ENCODE measurements at regions of chr1 and their contacts with region 1.

Region 1: GRCh38 chr1:91650764-91651163 is 150.1 kb downstream of the CDC7 start:
- DNase-seq: peak; percentile 89

Region 2: DNA sequence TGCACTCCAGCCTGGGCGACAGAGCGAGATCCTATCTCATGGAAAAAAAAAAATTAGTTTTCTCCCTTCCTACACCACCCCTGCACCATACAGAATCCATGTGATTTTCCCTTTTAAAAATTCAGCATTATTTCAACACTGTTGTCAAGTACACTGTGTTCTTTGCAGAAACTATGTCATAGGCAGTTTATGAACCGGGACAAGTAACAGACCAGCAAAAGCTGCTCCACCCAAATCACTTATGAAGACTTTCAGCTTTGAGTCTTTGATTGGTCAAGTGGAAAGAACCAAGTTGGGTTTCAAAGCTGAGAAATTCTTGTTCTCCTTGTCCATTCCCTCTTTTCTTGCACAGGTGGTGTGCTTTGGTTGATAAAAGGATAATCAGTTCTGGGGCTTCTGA is 22.8 kb after region 1 on chr1:
- intact Hi-C with region 1: loop called in 1 of 2 experiments (anchors 1 kb)
- DNase-seq: no peak

Region 3: DNA sequence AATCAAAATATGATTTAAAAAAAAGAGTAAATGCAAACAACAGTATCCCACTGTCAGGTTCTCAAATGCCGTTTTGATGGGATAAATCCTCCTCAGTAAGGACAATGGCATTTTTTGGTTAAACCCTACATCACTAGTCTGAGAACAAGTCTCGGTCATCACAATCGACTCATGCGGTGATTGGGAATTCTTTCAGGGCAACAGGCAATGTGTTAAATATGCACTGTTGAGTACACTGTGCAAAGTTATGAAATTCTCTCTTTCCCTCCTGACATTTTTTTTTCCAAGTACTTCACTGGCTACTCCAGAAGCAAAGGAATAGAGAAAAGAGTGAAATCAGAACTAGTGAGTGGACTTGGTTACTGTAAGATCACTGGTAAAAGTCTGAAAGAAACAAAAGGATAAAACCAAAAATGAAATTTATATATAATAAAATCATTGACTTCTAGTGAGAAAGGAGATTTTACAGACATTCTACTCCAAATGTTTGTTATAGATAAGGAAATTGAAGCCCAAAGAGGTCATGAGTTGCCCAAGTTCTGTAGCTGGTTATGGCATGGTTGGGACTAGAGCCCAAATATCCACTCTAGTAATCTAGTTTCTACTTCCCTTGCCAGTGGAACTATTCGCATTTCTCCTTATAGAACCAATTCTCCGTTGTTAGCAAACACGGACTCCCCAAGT is 123.9 kb after region 1 on chr1:
- intact Hi-C with region 1: loop called in 1 of 2 experiments (anchors 1 kb)
- DNase-seq: no peak